ENCODE measurements at regions of chr2 and their contacts with region 1.

Region 1: GRCh38 chr2:8324164-8324856 is 357.5 kb upstream of the ID2 start:
- DNase-seq: no peak
- ATAC-seq: peak; percentile 49 to 68 (median 67)
- H3K4me3 ChIP-seq: peak overlapping the region; percentile 9
- H3K4me3 Mint-ChIP-seq: peak overlapping the region; percentile 88
- H3K27ac ChIP-seq: peak overlapping the region; percentile 66
- H3K27ac Mint-ChIP-seq: peak overlapping the region; percentile 94 to 99
- H3K4me1 ChIP-seq: peaks cover 66% of the 10 kb centered on the region
- H3K4me1 Mint-ChIP-seq: peaks cover 90 to 96% of the 10 kb centered on the region in 2 donors
- H3K27me3 ChIP-seq: no peaks in the 10 kb centered on the region
- H3K27me3 Mint-ChIP-seq: no peaks in the 10 kb centered on the region
- CTCF ChIP-seq: no peak

Region 2: DNA sequence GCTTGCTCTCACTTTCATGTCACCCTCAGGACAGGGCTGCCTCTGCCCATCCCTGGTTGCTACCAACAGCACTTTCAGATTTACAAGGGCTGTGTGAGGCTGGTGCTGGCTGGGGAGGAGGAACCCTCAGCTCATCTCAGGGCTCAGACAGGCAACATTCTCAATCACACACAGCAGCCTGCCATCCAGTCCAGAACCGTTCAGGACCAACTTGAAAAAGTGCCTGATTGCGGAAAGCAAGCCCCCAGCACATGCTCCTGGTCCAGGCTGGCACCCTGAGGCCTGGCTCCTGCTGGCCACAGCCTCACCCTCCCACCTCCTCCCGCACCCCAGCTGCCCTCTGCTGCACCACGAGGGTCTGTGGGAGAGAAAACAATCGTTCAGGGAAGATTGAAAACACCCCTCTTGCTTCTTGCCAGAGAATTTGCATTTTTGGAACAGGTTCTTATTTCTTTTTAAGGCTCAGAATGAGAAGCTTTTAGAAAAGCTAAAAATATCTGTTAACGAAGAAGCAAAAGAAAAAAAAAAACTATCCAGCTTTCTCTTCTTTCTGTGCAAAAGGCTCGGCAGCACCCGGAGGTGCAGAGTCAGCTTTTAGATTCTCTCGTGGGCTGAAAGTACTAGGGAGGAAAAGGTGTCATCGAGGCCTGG is 46.3 kb before region 1 on chr2:
- intact Hi-C with region 1: no loop called
- DNase-seq: peak in 1 of 2 donors; percentile 28
- ATAC-seq: peak; percentile 46 to 58 (median 57)
- H3K4me3 ChIP-seq: peak overlapping the region; percentile 27
- H3K4me3 Mint-ChIP-seq: peak overlapping the region; percentile 99
- H3K27ac ChIP-seq: peak overlapping the region; percentile 71
- H3K27ac Mint-ChIP-seq: peak overlapping the region; percentile 98 to 99
- H3K4me1 ChIP-seq: peaks cover 47% of the 10 kb centered on the region
- H3K4me1 Mint-ChIP-seq: peaks cover 81 to 84% of the 10 kb centered on the region in 2 donors
- H3K27me3 ChIP-seq: no peaks in the 10 kb centered on the region
- H3K27me3 Mint-ChIP-seq: no peaks in the 10 kb centered on the region
- CTCF ChIP-seq: no peak

Region 3: DNA sequence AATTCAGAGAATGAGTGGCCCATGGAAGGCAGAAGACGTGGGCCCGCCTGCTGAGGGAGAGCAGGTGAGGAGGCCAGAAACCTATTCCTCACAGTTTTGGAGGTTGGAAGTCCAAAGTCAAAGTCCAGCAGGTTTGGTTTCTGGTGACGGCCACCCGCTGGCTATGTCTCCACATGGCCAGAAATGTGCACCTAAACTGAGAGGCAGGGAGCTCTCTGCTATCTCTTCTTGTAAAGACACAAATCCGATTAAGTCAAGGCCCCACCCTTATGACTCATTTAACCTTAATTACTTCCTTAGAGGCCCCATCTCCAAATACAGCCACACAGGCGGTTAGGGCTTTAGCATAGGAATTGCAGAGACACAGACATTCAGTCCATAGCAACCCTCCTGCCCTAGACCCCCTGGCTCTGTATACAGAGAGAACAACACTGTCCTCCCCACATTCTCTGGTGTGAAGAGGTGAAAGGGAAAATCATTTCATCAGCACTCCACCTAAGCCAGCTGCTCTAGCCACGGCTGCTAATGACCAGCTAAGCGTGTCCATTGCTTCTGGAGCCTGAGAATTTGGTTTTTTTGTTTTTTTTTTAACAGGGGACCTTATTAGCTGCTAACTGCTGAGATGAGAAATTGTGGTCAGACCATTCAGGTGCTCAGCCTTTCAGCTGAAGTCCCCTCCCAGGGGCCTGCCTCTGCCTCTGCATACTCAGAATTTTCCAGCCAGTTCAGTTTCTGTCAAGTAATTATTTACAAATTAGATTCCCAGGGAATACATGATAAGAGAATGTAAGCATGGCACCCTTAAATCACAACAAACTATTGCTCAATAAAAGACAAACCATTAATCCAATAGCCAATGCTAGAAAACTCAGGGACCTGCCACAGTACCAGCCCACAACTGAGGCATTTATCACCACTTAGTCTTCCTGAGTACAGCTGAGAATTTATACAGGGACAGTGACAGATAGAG is 11.2 kb before region 1 on chr2:
- intact Hi-C with region 1: loop called (anchors 1 kb)
- DNase-seq: peak in 1 of 2 donors; percentile 48
- ATAC-seq: peak; percentile 15 to 36 (median 25)
- H3K4me3 ChIP-seq: no peak overlapping the region
- H3K4me3 Mint-ChIP-seq: peak overlapping the region; percentile 82
- H3K27ac ChIP-seq: peak overlapping the region; percentile 81
- H3K27ac Mint-ChIP-seq: peak overlapping the region; percentile 94 to 99
- H3K4me1 ChIP-seq: peaks cover 91% of the 10 kb centered on the region
- H3K4me1 Mint-ChIP-seq: peaks cover 100% of the 10 kb centered on the region in 2 donors
- H3K27me3 ChIP-seq: no peaks in the 10 kb centered on the region
- H3K27me3 Mint-ChIP-seq: no peaks in the 10 kb centered on the region
- CTCF ChIP-seq: no peak

Region 4: DNA sequence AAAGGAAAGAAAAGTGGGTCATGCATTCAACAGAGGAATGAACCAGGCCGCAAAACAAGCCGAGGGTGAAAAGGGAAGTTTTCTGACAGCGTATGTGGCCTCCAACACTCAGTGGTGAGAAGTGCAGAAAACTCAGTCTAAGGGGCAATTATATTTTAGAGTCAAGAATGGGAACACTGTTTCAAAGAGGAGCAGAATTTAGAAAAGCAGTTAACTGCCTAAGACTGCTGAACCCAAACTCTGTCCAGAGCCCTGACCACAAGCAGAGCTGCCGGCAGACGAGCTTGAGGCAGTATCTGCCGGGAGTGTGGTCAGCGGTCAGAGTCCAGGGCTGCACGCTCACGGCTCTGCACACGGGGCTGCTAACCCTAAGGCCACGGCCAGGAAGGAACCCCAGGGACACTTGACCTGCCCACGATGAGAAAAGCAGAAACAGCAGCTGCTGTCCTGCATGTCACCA is 10.6 kb after region 1 on chr2:
- intact Hi-C with region 1: loop called (anchors 1 kb)
- DNase-seq: peak in 1 of 2 donors; percentile 39
- ATAC-seq: peak; percentile 71 to 81 (median 72)
- H3K4me3 ChIP-seq: no peak overlapping the region
- H3K4me3 Mint-ChIP-seq: peak overlapping the region; percentile 80
- H3K27ac ChIP-seq: peak overlapping the region; percentile 80
- H3K27ac Mint-ChIP-seq: peak overlapping the region; percentile 87 to 94
- H3K4me1 ChIP-seq: peaks cover 64% of the 10 kb centered on the region
- H3K4me1 Mint-ChIP-seq: peaks cover 70 to 71% of the 10 kb centered on the region in 2 donors
- H3K27me3 ChIP-seq: no peaks in the 10 kb centered on the region
- H3K27me3 Mint-ChIP-seq: no peaks in the 10 kb centered on the region
- CTCF ChIP-seq: no peak